GM10248 (cell line): ENCODE measurements at regions of chr7 and their contacts with region 1.

Region 1: GRCh38 chr7:149624419-149625339 is 127.1 kb upstream of the ZNF746 start:
- DNase-seq: peak; percentile 92
- CTCF ChIP-seq: peak; percentile 93

Region 2: GRCh38 chr7:149422129-149422913 is 202.4 kb before region 1 on chr7:
- CTCF ChIA-PET with region 1: interaction called, 29 read pairs
- POLR2A ChIA-PET with region 1: no interaction called
- DNase-seq: peak; percentile 95
- CTCF ChIP-seq: peak; percentile 97

Region 3: GRCh38 chr7:149460493-149461277 is 164.0 kb before region 1 on chr7 and contains the start of gene ZNF777:
- CTCF ChIA-PET with region 1: interaction called, 14 read pairs
- POLR2A ChIA-PET with region 1: no interaction called
- DNase-seq: peak; percentile 92
- CTCF ChIP-seq: peak; percentile 78

Region 4: DNA sequence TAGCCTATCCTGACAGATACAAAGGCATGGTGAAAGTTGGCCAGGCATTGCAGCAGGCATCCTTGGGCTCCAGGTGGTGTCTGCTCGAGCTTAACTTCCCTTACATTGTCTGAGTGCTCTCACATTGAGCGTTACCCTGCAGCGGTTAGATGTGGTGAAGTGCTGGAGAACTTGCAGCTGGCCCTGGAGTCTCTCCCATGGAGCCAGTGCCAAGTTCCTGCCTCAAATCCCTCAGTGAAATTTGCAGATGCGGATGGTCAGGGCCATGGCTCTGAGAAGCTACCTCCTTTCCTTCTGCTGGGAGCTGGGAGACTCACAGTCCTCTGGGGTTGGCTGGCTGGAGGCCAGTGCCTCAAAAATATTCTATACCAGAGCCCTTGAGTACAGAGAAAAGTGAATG is 123.8 kb before region 1 on chr7:
- CTCF ChIA-PET with region 1: interaction called, 10 read pairs
- POLR2A ChIA-PET with region 1: no interaction called
- DNase-seq: no peak
- CTCF ChIP-seq: no peak

Region 5: GRCh38 chr7:149598721-149599306 is 25.9 kb before region 1 on chr7:
- CTCF ChIA-PET with region 1: interaction called, 17 read pairs
- POLR2A ChIA-PET with region 1: interaction called, 4 read pairs
- DNase-seq: peak; percentile 44
- CTCF ChIP-seq: peak; percentile 52

Region 6: GRCh38 chr7:149608168-149608567 is 16.5 kb before region 1 on chr7:
- CTCF ChIA-PET with region 1: interaction called, 16 read pairs
- POLR2A ChIA-PET with region 1: no interaction called
- DNase-seq: no peak
- CTCF ChIP-seq: no peak

Region 7: DNA sequence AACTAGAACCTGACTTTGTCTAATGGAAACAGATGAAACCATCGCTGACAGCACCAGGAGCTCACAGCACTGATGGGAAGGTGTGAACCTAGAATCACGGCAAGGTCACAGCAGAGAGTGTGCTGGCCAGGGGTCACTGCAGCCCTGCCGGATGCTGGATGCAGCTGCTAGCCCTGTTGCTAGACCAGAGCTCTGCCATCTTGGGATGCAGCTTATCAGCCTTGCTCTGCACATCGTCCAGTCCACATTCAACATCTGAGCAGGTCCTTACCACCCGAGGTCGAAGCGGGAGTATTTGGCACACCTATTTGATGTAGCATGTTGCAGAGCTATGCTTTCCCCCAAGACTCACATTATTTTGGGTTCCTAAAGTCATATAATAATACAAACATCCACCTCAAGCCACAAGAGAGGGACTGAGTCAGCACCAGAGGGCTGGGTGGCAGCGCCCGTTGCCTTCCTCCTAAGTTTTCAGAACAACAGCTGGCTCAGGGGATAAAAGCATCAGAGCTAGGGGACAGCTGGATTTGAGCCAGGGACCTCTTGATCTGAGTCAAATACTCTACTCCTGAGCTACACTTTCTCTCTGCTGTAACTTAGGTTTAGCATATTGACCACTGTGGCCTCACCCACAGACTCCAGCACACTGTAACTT is 13.4 kb after region 1 on chr7:
- CTCF ChIA-PET with region 1: interaction called, 10 read pairs
- POLR2A ChIA-PET with region 1: no interaction called
- DNase-seq: no peak
- CTCF ChIP-seq: no peak